ENCODE measurements at regions of chr10 and their contacts with region 1.

Region 1: DNA sequence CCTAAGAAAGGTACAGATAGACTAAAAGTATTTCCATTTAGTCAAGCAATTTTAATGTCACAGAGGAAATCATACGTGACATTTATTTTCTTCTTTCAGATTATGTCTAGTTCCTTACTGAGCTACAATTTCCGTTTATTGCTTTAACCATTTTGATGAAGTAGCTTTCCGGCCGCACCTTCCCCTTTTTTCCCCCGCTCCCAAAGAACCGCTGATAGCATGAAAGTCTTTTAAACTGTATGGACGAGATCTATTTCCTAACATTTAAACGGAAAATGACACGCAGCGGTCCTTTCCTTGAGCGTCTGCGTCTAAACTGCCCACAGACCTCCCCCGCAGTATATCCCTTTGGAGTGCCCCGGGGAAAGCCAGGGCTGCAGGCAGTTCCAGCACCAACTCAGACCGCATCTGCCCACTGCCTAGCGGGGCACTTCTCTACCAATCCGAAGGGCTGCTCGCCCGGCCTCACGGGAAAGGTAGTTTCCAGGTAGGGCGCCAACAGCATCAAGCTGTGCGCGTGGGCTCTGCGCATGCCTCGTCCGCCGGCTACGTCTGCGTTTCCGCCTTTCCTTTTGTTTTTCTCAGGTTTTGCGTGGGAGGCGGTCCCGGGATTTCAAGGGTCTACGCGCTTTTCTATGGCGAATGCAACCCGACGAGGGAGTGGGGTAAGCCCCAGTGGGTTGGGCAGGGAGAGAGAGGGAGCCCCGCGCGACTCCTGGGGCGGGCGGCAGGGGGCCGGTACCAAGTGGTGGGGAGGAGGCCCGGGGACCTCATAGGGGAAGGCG is at the start of gene ZNF33A:
- DNase-seq: peak; percentile 83 to 96
- H3K4me3 ChIP-seq: peak within 1 kb of the TSS; percentile 61 to 89
- H3K27ac ChIP-seq: peak within 1 kb of the TSS; percentile 97 to 98
- H3K4me1 ChIP-seq: peaks cover 0 to 9% of the 10 kb centered on the region in 2 donors
- H3K27me3 ChIP-seq: no peaks in the 10 kb centered on the region
- CTCF ChIP-seq: peak in 1 of 3 experiments; percentile 8
- total RNA-seq, gene ZNF33A: 8.0 TPM

Region 2: DNA sequence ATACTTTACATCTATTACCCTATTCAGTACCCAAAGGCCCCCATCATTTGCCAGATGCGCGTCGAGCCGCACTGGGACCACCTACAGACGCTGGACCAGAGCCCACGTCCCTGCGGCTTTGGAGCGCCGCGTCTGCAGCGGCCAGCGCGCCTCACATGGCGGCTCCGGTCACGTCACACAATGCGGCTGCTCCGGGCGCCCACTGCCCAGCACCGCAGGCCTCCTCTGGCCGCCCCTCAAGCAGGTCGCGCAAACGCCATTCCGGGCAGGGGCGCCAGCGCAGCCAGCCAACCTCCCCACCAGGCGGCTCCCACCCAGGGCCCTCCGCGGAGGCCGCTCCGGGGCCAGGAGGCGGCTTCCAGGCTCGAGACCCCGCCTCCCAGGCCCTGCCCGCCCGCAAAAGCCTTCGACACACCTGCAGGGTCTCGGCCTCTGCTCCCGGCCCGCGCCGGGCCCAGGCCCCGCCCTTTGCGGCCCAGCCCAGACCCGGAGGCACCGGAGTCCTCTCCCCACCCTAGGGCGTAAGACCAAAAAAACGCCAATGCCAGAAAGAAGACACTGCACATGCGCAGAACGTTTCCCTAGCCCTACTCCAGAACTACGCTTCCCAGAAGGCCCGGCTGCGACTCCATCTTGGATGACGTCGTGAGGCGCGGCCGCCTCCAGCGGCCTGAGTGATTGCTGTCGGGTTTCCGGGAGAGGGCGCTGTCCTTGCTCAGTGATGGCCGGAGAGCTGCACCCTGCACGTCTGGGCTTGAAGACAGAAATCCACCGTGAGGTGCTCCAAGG is 34.0 kb before region 1 on chr10 and contains the start of gene ZNF25:
- intact Hi-C with region 1: loop called (anchors 1 kb)
- DNase-seq: peak; percentile 96 to 100
- H3K4me3 ChIP-seq: peak within 1 kb of the TSS; percentile 75 to 92
- H3K27ac ChIP-seq: peak within 1 kb of the TSS; percentile 97 to 98
- H3K4me1 ChIP-seq: no peaks in the 10 kb centered on the region
- H3K27me3 ChIP-seq: no peaks in the 10 kb centered on the region
- CTCF ChIP-seq: peak; percentile 84 to 92 (median 89)
- total RNA-seq, gene ZNF25: 8.9 TPM

Measured in ascending aorta (tissue), 2 donors.